Prostate gland (tissue), 2 donors: ENCODE measurements at regions of chr17 and their contacts with region 1.

Region 1: GRCh38 chr17:66715745-66716156 is 119.2 kb upstream of the CACNG5 start:
- DNase-seq: peak; percentile 55
- H3K4me3 ChIP-seq: no peak overlapping the region
- H3K27ac ChIP-seq: no peak overlapping the region
- H3K4me1 ChIP-seq: peaks cover 8% of the 10 kb centered on the region
- H3K27me3 ChIP-seq: no peaks in the 10 kb centered on the region
- CTCF ChIP-seq: peak; percentile 42 to 89 (median 73)
- POLR2A ChIP-seq: no peak

Region 2: DNA sequence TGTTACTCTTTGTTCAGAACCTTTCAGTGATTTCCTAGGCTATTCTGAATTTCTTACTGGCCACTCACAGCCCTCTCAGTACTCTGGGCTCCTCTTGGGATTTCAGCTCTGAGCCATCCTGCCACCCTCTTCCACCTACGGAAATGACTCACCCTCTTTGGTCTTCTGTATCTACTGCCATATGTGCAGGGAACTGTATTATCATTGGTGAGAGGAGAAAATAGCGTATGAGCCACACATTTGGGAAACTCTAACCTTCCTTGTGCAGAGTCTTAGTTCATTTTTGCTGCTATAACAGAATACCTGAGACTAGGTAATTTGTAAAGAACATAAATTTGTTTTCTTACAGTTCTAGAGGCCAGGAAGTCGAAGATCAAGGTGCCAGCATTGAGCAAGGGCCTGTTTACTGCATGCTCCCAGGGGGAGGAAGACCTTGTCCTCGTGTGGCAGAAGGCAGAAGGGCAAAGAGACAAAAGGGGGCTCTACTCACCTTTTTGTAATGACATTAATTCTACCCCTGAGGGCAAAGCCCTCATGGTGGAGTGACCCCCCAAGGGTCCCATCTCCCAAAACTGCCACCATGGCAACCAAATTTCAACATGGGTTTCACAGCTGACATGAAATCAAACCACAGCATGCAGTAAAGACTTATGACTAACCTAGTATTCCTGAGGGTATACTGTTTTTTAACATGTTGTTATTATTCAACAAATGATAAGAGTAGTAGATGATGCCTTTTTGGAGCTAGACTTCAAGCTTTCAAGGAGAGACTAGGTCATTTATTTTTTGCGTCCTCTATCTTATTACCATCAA is 221.6 kb before region 1 on chr17:
- intact Hi-C with region 1: no loop called
- DNase-seq: no peak
- H3K4me3 ChIP-seq: no peak overlapping the region
- H3K27ac ChIP-seq: no peak overlapping the region
- H3K4me1 ChIP-seq: no peaks in the 10 kb centered on the region
- H3K27me3 ChIP-seq: no peaks in the 10 kb centered on the region
- CTCF ChIP-seq: no peak
- POLR2A ChIP-seq: no peak

Region 3: DNA sequence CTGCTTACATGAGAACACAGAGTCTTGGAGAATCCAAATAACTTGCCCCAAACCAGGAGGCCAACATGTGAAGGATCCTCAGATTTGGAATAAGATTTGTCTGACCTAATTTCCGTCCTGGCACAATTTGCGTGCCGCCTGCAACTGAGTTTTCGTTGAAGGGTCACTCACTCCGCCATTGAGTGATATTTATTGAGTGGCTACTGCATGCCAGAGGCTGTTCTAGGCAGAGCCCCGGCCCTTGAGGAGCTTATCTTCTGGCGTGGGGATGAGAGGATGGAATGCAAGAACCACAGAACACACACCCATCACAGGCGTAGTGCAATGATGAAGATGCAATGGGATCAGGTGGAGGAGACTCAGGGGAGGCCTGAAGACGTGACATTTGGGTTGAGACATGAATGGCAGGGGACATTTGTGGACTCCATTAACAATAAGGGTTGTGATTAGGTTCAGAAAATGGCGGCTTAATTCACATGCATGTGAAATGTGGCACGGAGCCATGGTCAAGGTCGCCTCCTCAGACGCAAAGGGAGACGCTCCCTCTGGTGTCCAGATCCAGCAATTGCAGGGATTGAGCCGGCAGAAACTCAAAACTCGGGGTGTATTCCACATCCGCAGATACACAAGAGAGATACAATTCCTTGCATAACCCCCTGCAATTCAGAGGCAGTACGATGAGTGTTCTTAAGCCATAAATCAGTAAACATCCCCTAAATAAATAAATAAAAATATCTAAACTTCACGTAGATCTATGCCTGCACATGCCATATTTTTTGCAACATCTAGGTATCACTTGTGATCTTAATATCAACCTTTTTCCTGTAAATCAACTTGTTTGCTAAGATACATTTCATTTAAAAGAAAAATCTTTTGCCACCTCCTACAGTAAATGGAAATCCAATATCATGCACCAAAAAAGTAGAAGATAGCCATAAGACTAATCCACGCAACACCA is 190.8 kb after region 1 on chr17:
- intact Hi-C with region 1: loop called (anchors 1 kb)
- DNase-seq: peak; percentile 78
- H3K4me3 ChIP-seq: no peak overlapping the region
- H3K27ac ChIP-seq: no peak overlapping the region
- H3K4me1 ChIP-seq: peaks cover 5% of the 10 kb centered on the region
- H3K27me3 ChIP-seq: no peaks in the 10 kb centered on the region
- CTCF ChIP-seq: peak; percentile 75 to 93 (median 90)
- POLR2A ChIP-seq: no peak

Region 4: GRCh38 chr17:66975604-66976384 is 260.0 kb after region 1 on chr17:
- intact Hi-C with region 1: loop called (anchors 5 kb)
- DNase-seq: peak; percentile 45
- H3K4me3 ChIP-seq: no peak overlapping the region
- H3K27ac ChIP-seq: no peak overlapping the region
- H3K4me1 ChIP-seq: no peaks in the 10 kb centered on the region
- H3K27me3 ChIP-seq: no peaks in the 10 kb centered on the region
- CTCF ChIP-seq: peak in 3 of 4 experiments; percentile 27 to 55 (median 50)
- POLR2A ChIP-seq: no peak